Caco-2 (cell line): ENCODE measurements at regions of chr1 and their contacts with region 1.

Region 1: DNA sequence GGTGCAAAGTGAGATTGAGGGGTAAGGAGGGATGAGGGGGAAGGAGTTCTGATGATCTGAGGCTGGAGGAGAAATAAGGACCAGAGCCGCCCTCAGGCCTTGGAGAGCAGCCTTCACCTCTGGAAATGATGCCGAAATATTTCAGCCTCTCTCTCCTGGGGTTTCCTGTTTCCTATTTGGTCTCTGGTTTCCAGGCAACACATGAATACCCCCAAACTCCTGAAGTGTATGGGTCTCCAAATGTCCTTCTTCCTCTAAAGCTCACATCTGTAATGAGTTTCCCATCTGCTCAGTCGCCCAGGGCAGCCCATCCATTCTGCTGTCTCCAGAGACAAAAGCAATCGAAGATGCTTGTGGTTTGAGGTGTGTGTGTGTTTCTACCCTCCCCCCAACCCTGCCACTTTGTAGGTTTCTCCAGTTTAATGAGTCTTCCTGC is 52.0 kb upstream of the FAM20B start:
- DNase-seq: no peak
- H3K4me3 ChIP-seq: no peak overlapping the region
- H3K4me3 Mint-ChIP-seq: no peak overlapping the region
- H3K27ac Mint-ChIP-seq: no peak overlapping the region
- H3K4me1 ChIP-seq: no peaks in the 10 kb centered on the region
- H3K4me1 Mint-ChIP-seq: no peaks in the 10 kb centered on the region
- H3K27me3 ChIP-seq: no peaks in the 10 kb centered on the region
- H3K27me3 Mint-ChIP-seq: no peaks in the 10 kb centered on the region
- CTCF ChIP-seq: no peak

Region 2: GRCh38 chr1:178895928-178896327 is 77.8 kb before region 1 on chr1:
- CTCF ChIA-PET with region 1: interaction called, 12 read pairs
- POLR2A ChIA-PET with region 1: no interaction called
- intact Hi-C with region 1: no loop called
- DNase-seq: no peak
- H3K4me3 ChIP-seq: no peak overlapping the region
- H3K4me3 Mint-ChIP-seq: no peak overlapping the region
- H3K27ac Mint-ChIP-seq: no peak overlapping the region
- H3K4me1 ChIP-seq: no peaks in the 10 kb centered on the region
- H3K4me1 Mint-ChIP-seq: no peaks in the 10 kb centered on the region
- H3K27me3 ChIP-seq: no peaks in the 10 kb centered on the region
- H3K27me3 Mint-ChIP-seq: no peaks in the 10 kb centered on the region
- CTCF ChIP-seq: no peak

Region 3: GRCh38 chr1:179337288-179337687 is 363.6 kb after region 1 on chr1:
- CTCF ChIA-PET with region 1: no interaction called
- POLR2A ChIA-PET with region 1: no interaction called
- intact Hi-C with region 1: no loop called
- DNase-seq: no peak
- H3K4me3 ChIP-seq: no peak overlapping the region
- H3K4me3 Mint-ChIP-seq: no peak overlapping the region
- H3K27ac Mint-ChIP-seq: no peak overlapping the region
- H3K4me1 ChIP-seq: peaks cover 5% of the 10 kb centered on the region; the same call in 1 of the 2 replicates
- H3K4me1 Mint-ChIP-seq: peaks cover 6% of the 10 kb centered on the region
- H3K27me3 ChIP-seq: no peaks in the 10 kb centered on the region
- H3K27me3 Mint-ChIP-seq: no peaks in the 10 kb centered on the region
- CTCF ChIP-seq: no peak